GM12878 (cell line): ENCODE measurements at regions of chr20 and their contacts with region 1.

Region 1: DNA sequence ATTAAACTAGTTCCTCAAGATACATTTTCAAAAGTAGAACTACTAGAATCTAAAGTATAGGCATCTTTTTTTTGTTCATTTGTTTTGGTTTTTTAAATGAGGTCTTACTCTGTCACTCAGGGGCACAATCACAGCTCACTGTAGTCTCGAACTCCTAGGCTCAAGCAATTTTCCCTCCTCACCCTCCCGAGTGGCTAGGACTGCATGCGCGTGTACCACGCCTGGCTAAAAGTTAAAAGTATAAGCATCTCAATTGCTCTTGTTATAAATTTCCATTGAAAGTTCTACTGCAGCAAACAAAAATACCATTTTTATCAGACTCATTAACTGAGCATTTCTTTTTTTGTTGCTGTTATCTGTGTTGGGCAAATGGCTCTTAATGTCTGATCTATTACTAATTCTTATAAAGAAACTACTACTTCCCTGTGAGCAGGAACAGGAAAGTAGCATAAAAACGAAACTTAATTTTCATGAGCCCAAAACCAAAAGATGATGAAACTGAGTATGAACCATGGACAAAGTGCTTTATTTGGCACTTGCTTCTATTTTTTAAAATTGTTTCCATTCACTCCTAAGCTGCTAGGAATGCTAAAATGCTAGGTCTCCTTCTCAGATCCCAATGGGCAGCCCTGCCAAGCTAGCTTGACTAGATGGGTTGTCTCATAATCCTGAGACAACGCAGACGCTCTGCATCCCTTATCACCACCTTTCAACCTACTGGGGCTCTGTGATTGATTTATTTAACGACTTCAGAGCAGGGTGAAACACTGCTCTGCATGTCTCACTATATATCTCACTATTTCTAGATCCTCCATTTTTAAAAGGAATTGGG is 36.9 kb downstream of the TRPC4AP start:
- DNase-seq: no peak
- ATAC-seq: peak; percentile 83
- H3K4me3 ChIP-seq: no peak overlapping the region
- H3K27ac ChIP-seq: peak overlapping the region; percentile 90
- H3K4me1 ChIP-seq: peaks cover 20% of the 10 kb centered on the region
- H3K27me3 ChIP-seq: no peaks in the 10 kb centered on the region
- CTCF ChIP-seq: no peak
- EP300 ChIP-seq: no peak
- POLR2A ChIP-seq: no peak
- RAD21 ChIP-seq: no peak

Region 2: DNA sequence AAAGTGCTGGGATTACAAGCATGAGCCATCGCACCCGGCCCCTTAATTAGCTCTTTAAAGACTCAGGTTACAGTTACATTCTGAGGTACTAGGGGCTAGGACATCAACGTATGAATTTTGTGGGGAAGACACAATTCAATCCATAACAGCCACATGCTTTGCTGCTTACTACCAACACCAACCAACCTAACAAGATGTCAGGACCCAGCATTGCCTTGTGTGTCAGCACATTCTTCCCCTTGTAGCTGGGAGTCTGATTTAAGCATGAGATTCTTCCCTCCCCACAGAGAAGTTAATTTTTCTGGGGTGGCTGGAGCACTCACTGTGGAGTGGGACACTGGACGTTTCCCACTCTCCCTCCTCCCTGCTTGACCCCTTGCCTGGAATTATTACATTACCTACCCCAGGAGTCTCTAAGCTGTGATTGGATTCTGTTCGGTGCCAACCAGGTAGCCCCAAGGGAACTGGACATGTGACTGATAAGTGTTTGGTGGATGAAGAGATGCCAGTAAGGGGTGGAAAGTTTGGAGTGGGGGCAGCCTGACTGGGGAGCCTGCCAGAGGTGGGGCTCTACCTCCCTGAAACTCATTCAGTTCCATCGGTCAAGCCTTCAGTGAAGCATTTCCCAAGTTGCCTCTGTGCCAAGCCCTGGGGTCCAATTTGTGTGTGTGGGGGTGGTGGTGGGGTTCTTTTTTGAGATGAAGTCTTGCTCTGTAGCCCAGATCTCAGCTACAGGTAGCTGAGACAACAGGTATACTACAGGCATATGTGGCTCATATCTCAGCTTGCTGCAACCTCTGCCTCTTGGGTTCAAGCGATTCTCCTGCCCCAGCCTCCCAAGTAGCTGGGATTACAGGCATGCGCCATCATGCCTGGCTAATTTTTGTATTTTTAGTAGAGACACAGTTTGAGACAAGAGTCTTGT is 1329.8 kb before region 1 on chr20:
- CTCF ChIA-PET with region 1: no interaction called
- POLR2A ChIA-PET with region 1: interaction called, 10 read pairs
- RAD21 ChIA-PET with region 1: no interaction called
- SMC1A ChIA-PET with region 1: no interaction called
- in situ Hi-C with region 1: no loop called
- intact Hi-C with region 1: no loop called
- DNase-seq: no peak
- ATAC-seq: no peak
- H3K4me3 ChIP-seq: no peak overlapping the region
- H3K27ac ChIP-seq: no peak overlapping the region
- H3K4me1 ChIP-seq: no peaks in the 10 kb centered on the region
- H3K27me3 ChIP-seq: no peaks in the 10 kb centered on the region
- CTCF ChIP-seq: no peak
- EP300 ChIP-seq: no peak
- POLR2A ChIP-seq: no peak
- RAD21 ChIP-seq: no peak

Region 3: DNA sequence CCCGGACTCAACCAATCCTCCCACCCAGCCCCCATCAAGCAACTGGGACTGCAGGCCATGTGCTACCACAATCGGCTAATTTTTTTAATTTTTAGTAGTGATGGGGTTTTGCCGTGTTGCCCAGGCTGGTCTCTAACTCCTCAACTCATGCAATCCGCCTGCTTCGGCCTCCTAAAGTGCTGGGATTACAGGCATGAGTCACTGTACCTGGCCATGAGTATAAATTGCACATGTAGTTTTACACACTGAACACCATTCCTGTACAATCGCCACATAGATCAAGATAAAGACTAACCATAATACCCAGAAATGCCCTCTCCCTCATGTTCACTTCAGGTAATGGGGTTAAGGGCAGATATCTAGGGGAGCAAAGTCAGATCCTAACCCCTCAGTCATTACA is 10.5 kb after region 1 on chr20:
- CTCF ChIA-PET with region 1: no interaction called
- POLR2A ChIA-PET with region 1: interaction called, 6 read pairs
- RAD21 ChIA-PET with region 1: interaction called, 4 read pairs
- SMC1A ChIA-PET with region 1: interaction called, 10 read pairs
- in situ Hi-C with region 1: no loop called
- intact Hi-C with region 1: no loop called
- DNase-seq: no peak
- ATAC-seq: no peak
- H3K4me3 ChIP-seq: no peak overlapping the region
- H3K27ac ChIP-seq: no peak overlapping the region
- H3K4me1 ChIP-seq: peaks cover 20% of the 10 kb centered on the region
- H3K27me3 ChIP-seq: no peaks in the 10 kb centered on the region
- CTCF ChIP-seq: no peak
- EP300 ChIP-seq: no peak
- POLR2A ChIP-seq: no peak
- RAD21 ChIP-seq: no peak